B cell (primary cell): ENCODE measurements at regions of chr3 and their contacts with region 1.

Region 1: GRCh38 chr3:49428697-49429100 is 425 bp downstream of the NICN1 start:
- DNase-seq: no peak
- ATAC-seq: no peak
- H3K4me3 ChIP-seq: peak overlapping the region; percentile 47 to 77 (median 72)
- H3K4me3 Mint-ChIP-seq: peak overlapping the region; percentile 91
- H3K27ac ChIP-seq: peak overlapping the region; percentile 77 to 89
- H3K27ac Mint-ChIP-seq: peak overlapping the region; percentile 94
- H3K4me1 ChIP-seq: peaks cover 7 to 11% of the 10 kb centered on the region in 2 donors
- H3K4me1 Mint-ChIP-seq: peaks cover 11% of the 10 kb centered on the region
- H3K27me3 ChIP-seq: no peaks in the 10 kb centered on the region
- H3K27me3 Mint-ChIP-seq: no peaks in the 10 kb centered on the region
- CTCF ChIP-seq: no peak

Region 2: DNA sequence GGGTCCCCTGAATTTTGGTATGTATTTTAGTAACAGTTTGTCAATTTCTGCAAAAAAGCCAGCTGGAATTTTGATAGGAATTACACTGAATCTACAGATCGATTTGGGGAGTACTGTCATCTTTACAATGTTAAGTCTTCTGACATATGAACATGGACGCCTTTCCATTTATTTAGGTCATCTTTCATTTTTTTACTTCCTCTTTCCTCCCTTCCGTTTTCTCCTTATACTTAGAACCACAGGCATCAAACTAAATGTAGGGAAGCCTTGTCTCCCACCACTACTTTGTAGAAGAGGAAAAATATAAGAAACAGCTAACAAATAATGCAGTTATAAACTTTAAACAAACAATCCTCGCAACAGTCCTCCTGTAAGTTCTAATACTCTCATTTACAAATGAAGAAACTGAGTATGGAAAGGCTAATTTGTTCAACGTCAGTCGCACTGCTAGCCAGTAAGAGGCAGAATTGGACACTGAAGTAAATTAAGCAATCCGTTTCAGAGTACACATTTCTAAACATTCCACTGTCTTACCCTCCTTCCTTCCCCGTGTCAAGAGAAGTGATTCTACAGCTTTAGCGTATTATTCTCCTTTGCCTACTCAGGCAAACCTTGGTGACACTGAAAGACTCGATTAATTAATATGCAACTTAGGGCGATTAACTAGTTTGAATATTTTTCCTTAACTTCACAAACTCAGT is 42.5 kb before region 1 on chr3:
- CTCF ChIA-PET with region 1: no interaction called
- POLR2A ChIA-PET with region 1: interaction called, 10 read pairs
- intact Hi-C with region 1: no loop called
- DNase-seq: peak; percentile 40
- ATAC-seq: no peak
- H3K4me3 ChIP-seq: peak overlapping the region in 1 of 5 experiments; percentile 15
- H3K4me3 Mint-ChIP-seq: peak overlapping the region; percentile 27
- H3K27ac ChIP-seq: peak overlapping the region in 1 of 2 donors; percentile 28
- H3K27ac Mint-ChIP-seq: peak overlapping the region; percentile 7
- H3K4me1 ChIP-seq: peaks cover 33 to 40% of the 10 kb centered on the region in 2 donors
- H3K4me1 Mint-ChIP-seq: peaks cover 49% of the 10 kb centered on the region
- H3K27me3 ChIP-seq: no peaks in the 10 kb centered on the region
- H3K27me3 Mint-ChIP-seq: no peaks in the 10 kb centered on the region
- CTCF ChIP-seq: no peak

Region 3: GRCh38 chr3:49411968-49412631 is 16.6 kb before region 1 on chr3 and contains the starts of genes RHOA and TCTA:
- CTCF ChIA-PET with region 1: interaction called, 6 read pairs
- POLR2A ChIA-PET with region 1: interaction called, 29 read pairs
- intact Hi-C with region 1: loop called (anchors 1 kb)
- DNase-seq: peak; percentile 100
- ATAC-seq: peak; percentile 77
- H3K4me3 ChIP-seq: peak within 1 kb of the TSS; percentile 74 to 96 (median 90)
- H3K4me3 Mint-ChIP-seq: peak within 1 kb of the TSS; percentile 96
- H3K27ac ChIP-seq: peak within 1 kb of the TSS; percentile 90 to 97
- H3K27ac Mint-ChIP-seq: peak within 1 kb of the TSS; percentile 96
- H3K4me1 ChIP-seq: peaks cover 71 to 83% of the 10 kb centered on the region in 2 donors
- H3K4me1 Mint-ChIP-seq: peaks cover 74% of the 10 kb centered on the region
- H3K27me3 ChIP-seq: no peaks in the 10 kb centered on the region
- H3K27me3 Mint-ChIP-seq: no peaks in the 10 kb centered on the region
- CTCF ChIP-seq: no peak
- total RNA-seq, gene RHOA: 298 and 306 TPM in 2 replicates
- total RNA-seq, gene TCTA: 46.4 and 49.3 TPM in 2 replicates

Region 4: DNA sequence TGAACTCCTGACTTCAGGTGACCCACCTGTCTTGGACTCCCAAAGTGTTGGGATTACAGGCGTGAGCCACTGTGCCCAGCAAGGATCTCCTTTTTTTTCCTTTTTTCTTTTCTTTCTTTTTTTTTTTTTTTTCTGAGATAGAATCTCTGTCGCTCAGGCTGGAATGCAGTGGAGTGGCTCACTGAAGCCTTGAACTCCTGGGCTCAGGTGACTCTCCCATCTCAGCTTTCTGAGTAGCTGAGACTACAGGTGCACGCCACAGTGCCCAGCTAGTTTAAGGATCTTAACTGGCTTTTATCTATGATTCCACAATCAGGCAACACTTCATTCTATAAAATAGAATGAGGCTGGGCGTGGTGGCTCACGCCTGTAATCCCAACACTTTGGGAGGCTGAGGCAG is 16.7 kb after region 1 on chr3:
- CTCF ChIA-PET with region 1: interaction called, 18 read pairs
- POLR2A ChIA-PET with region 1: interaction called, 14 read pairs
- intact Hi-C with region 1: loop called (anchors 1 kb)
- DNase-seq: no peak
- ATAC-seq: no peak
- H3K4me3 ChIP-seq: no peak overlapping the region
- H3K4me3 Mint-ChIP-seq: no peak overlapping the region
- H3K27ac ChIP-seq: no peak overlapping the region
- H3K27ac Mint-ChIP-seq: peak overlapping the region; percentile 26
- H3K4me1 ChIP-seq: peaks cover 18 to 27% of the 10 kb centered on the region in 2 donors
- H3K4me1 Mint-ChIP-seq: peaks cover 15% of the 10 kb centered on the region
- H3K27me3 ChIP-seq: no peaks in the 10 kb centered on the region
- H3K27me3 Mint-ChIP-seq: no peaks in the 10 kb centered on the region
- CTCF ChIP-seq: no peak